ENCODE measurements at regions of chr7 and their contacts with region 1.

Region 1: GRCh38 chr7:30938435-30939316 is 25.1 kb upstream of the GHRHR start:
- DNase-seq: peak; percentile 32
- H3K4me3 ChIP-seq: no peak overlapping the region; the same call in 1 of the 2 replicates
- H3K27ac ChIP-seq: no peak overlapping the region
- H3K27me3 ChIP-seq: peaks cover 25% of the 10 kb centered on the region
- CTCF ChIP-seq: peak; percentile 97

Region 2: GRCh38 chr7:30800785-30801252 is 137.9 kb before region 1 on chr7:
- CTCF ChIA-PET with region 1: interaction called, 12 read pairs
- POLR2A ChIA-PET with region 1: interaction called, 6 read pairs
- DNase-seq: peak; percentile 63
- H3K4me3 ChIP-seq: no peak overlapping the region
- H3K27ac ChIP-seq: no peak overlapping the region
- H3K27me3 ChIP-seq: no peaks in the 10 kb centered on the region
- CTCF ChIP-seq: peak; percentile 79

Region 3: GRCh38 chr7:30877015-30877769 is 61.5 kb before region 1 on chr7:
- CTCF ChIA-PET with region 1: interaction called, 10 read pairs
- POLR2A ChIA-PET with region 1: no interaction called
- DNase-seq: no peak
- H3K4me3 ChIP-seq: no peak overlapping the region
- H3K27ac ChIP-seq: no peak overlapping the region
- H3K27me3 ChIP-seq: no peaks in the 10 kb centered on the region
- CTCF ChIP-seq: no peak

Region 4: GRCh38 chr7:30956704-30957103 is 18.0 kb after region 1 on chr7:
- CTCF ChIA-PET with region 1: interaction called, 27 read pairs
- POLR2A ChIA-PET with region 1: no interaction called
- DNase-seq: no peak
- H3K4me3 ChIP-seq: no peak overlapping the region
- H3K27ac ChIP-seq: no peak overlapping the region
- H3K27me3 ChIP-seq: peaks cover 5% of the 10 kb centered on the region
- CTCF ChIP-seq: no peak

Region 5: GRCh38 chr7:30974605-30975255 is 36.1 kb after region 1 on chr7:
- CTCF ChIA-PET with region 1: interaction called, 16 read pairs
- POLR2A ChIA-PET with region 1: no interaction called
- DNase-seq: no peak
- H3K4me3 ChIP-seq: no peak overlapping the region
- H3K27ac ChIP-seq: no peak overlapping the region
- H3K27me3 ChIP-seq: peaks cover 30% of the 10 kb centered on the region
- CTCF ChIP-seq: peak; percentile 56

Region 6: GRCh38 chr7:31134246-31135188 is 195.8 kb after region 1 on chr7:
- CTCF ChIA-PET with region 1: interaction called, 16 read pairs
- POLR2A ChIA-PET with region 1: no interaction called
- DNase-seq: peak; percentile 23
- H3K4me3 ChIP-seq: no peak overlapping the region
- H3K27ac ChIP-seq: no peak overlapping the region
- H3K27me3 ChIP-seq: no peaks in the 10 kb centered on the region
- CTCF ChIP-seq: peak; percentile 72